Activated CD4-positive, alpha-beta T cell treated with anti-CD3 and anti-CD28 coated beads for 36 hours (primary cell): ENCODE measurements at regions of chr3 and their contacts with region 1.

Region 1: GRCh38 chr3:129627429-129628168 is 21.1 kb upstream of the PLXND1 start:
- DNase-seq: peak; percentile 82
- ATAC-seq: peak; percentile 67
- H3K4me3 Mint-ChIP-seq: peak overlapping the region; percentile 88
- H3K27ac Mint-ChIP-seq: peak overlapping the region; percentile 67
- H3K4me1 Mint-ChIP-seq: peaks cover 13% of the 10 kb centered on the region
- H3K27me3 Mint-ChIP-seq: no peaks in the 10 kb centered on the region

Region 2: DNA sequence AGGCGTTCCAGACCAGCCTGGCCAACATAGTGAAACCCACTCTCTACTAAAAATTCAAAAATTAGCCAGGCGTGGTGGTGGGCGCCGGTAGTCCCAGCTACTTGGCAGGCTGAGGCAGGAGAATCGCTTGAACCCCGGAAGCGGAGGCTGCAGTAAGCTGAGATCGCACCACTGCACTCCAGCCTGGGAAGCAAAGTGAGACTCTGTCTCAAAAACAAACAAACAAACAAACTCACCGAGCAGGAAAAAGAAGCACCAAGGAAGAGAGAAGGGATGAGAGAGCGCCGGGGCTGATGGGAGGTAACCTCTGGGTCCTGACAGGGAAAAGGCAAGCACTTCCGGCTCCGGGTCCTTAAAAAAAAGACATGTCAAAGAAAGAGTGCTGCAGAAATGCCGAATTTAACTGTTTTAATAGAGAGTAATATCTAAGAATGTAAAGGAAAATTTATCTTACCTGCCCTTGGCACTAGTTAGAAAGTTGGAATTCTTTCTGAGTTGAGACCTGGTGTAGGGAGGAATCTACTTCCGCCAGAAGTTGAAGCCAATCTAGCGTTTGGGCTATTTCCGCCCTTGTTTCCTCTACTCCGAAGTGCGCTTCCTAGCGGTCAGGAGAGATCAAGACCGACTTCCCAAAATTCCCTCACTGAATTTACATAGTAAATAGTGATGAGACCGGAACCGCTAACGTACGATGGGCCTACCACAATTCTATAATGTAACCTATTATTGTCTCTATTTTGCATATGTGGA is 228.3 kb before region 1 on chr3:
- CTCF ChIA-PET with region 1: no interaction called
- POLR2A ChIA-PET with region 1: no interaction called
- intact Hi-C with region 1: loop called in 1 of 2 experiments (anchors 2 kb)
- DNase-seq: peak; percentile 90
- ATAC-seq: peak; percentile 82
- H3K4me3 Mint-ChIP-seq: peak overlapping the region; percentile 99
- H3K27ac Mint-ChIP-seq: peak overlapping the region; percentile 98
- H3K4me1 Mint-ChIP-seq: peaks cover 29% of the 10 kb centered on the region
- H3K27me3 Mint-ChIP-seq: no peaks in the 10 kb centered on the region

Region 3: GRCh38 chr3:129606636-129607390 is 20.8 kb before region 1 on chr3 and contains the start of gene PLXND1:
- CTCF ChIA-PET with region 1: interaction called, 4 read pairs
- POLR2A ChIA-PET with region 1: no interaction called
- intact Hi-C with region 1: loop called in 1 of 2 experiments (anchors 2 kb)
- DNase-seq: peak; percentile 52
- ATAC-seq: peak; percentile 47
- H3K4me3 Mint-ChIP-seq: peak within 1 kb of the TSS; percentile 78
- H3K27ac Mint-ChIP-seq: peak within 1 kb of the TSS; percentile 89
- H3K4me1 Mint-ChIP-seq: peaks cover 10% of the 10 kb centered on the region
- H3K27me3 Mint-ChIP-seq: peaks cover 18% of the 10 kb centered on the region
- total RNA-seq, gene PLXND1: 3.1 to 4.6 TPM

Region 4: DNA sequence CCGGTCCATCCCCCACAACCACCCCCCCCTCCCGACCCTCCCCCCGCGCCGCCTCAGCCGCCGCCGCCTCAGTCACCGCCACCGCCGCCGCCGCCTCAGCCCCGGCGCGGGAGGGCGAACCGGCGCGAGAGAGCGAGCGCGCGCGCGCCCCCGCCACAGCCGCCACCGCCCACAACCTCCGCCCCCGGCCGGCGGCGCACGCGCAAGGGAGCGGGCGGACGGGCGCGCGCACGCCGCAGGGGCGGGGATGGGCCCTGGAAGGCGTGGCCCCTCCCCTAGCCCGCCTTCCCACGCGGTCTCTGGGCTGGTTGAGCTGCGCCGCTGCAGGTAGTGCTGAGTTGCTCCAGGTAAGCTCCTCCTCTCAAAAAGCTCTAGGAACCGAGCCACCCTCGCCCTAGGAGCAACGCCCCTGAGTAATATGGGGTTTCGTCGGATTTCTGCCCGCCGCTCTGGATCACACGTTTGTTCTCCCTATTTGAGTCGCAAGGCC is 266.0 kb after region 1 on chr3 and contains the start of gene TMCC1:
- CTCF ChIA-PET with region 1: no interaction called
- POLR2A ChIA-PET with region 1: no interaction called
- intact Hi-C with region 1: loop called in 1 of 2 experiments (anchors 1 kb)
- DNase-seq: peak; percentile 92
- ATAC-seq: peak; percentile 92
- H3K4me3 Mint-ChIP-seq: peak within 1 kb of the TSS; percentile 86
- H3K27ac Mint-ChIP-seq: peak within 1 kb of the TSS; percentile 85
- H3K4me1 Mint-ChIP-seq: peaks cover 36% of the 10 kb centered on the region
- H3K27me3 Mint-ChIP-seq: no peaks in the 10 kb centered on the region
- total RNA-seq, gene TMCC1: 14.8 to 17.3 TPM

Region 5: GRCh38 chr3:130093741-130094391 is 466.3 kb after region 1 on chr3:
- CTCF ChIA-PET with region 1: no interaction called
- POLR2A ChIA-PET with region 1: no interaction called
- intact Hi-C with region 1: loop called in 1 of 2 experiments (anchors 5 kb)
- DNase-seq: peak; percentile 56
- ATAC-seq: peak; percentile 39
- H3K4me3 Mint-ChIP-seq: peak overlapping the region; percentile 47
- H3K27ac Mint-ChIP-seq: peak overlapping the region; percentile 70
- H3K4me1 Mint-ChIP-seq: peaks cover 26% of the 10 kb centered on the region
- H3K27me3 Mint-ChIP-seq: no peaks in the 10 kb centered on the region